ENCODE measurements at regions of chr2 and their contacts with region 1.

Region 1: DNA sequence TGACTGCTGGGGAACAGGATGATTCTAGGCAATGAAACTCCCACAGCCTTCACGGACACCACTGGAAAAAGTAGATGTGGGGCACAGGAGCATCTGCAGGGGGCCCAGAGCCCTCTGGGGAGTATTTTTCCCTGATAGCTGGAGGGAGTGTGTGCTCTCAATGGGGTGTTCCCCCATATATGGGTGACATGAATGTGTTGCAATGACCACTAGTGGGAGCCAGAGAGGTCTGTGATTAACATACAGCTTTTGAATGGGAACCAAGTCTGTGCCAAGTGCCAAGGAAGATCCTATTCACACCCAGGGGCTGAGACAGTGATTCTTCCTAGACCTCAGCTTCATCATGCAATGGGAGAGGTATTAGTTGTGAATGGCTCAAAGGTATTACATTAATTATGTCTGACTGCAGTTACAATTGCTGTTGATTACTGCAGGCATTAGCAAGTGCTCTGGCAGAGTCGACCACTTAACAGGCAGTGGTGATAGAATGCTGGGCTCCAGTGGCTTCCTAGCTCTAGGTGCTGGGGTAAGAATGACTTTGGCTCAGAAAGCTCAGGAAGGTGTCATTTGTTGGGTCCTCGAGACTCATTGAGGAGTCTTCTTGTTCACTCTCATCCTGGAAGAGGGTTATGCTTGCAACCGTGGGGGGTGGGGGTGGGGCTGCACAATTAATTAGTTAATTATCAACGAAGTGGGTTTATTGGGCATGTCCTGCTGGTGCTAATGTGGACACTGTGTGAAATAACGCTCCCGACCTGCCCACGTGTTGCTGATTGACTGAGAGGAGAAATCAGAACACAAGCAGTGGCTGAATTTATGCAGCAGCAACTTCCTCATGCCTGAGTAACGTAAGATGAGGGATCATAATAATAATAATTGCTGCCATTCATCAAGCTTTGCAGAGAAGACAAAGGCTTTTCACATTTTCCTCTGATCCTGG is 194.1 kb downstream of the CLIP4 start:
- DNase-seq: no peak
- ATAC-seq: peak; percentile 34
- H3K4me3 Mint-ChIP-seq: no peak overlapping the region
- H3K27ac Mint-ChIP-seq: no peak overlapping the region
- H3K4me1 Mint-ChIP-seq: peaks cover 2% of the 10 kb centered on the region
- H3K27me3 Mint-ChIP-seq: peaks cover 5% of the 10 kb centered on the region
- CTCF ChIP-seq: peak; percentile 73

Region 2: GRCh38 chr2:28958689-28959088 is 350.7 kb before region 1 on chr2:
- CTCF ChIA-PET with region 1: no interaction called
- POLR2A ChIA-PET with region 1: no interaction called
- intact Hi-C with region 1: loop called (anchors 10 kb)
- DNase-seq: no peak
- ATAC-seq: peak; percentile 52
- H3K4me3 Mint-ChIP-seq: no peak overlapping the region
- H3K27ac Mint-ChIP-seq: no peak overlapping the region
- H3K4me1 Mint-ChIP-seq: no peaks in the 10 kb centered on the region
- H3K27me3 Mint-ChIP-seq: peaks cover 5% of the 10 kb centered on the region
- CTCF ChIP-seq: no peak

Region 3: GRCh38 chr2:29290293-29291047 is 18.9 kb before region 1 on chr2:
- CTCF ChIA-PET with region 1: no interaction called
- POLR2A ChIA-PET with region 1: no interaction called
- intact Hi-C with region 1: no loop called
- DNase-seq: no peak
- ATAC-seq: no peak
- H3K4me3 Mint-ChIP-seq: no peak overlapping the region
- H3K27ac Mint-ChIP-seq: no peak overlapping the region
- H3K4me1 Mint-ChIP-seq: no peaks in the 10 kb centered on the region
- H3K27me3 Mint-ChIP-seq: peaks cover 20% of the 10 kb centered on the region
- CTCF ChIP-seq: no peak

Region 4: GRCh38 chr2:29469516-29469915 is 160.2 kb after region 1 on chr2:
- CTCF ChIA-PET with region 1: no interaction called
- POLR2A ChIA-PET with region 1: no interaction called
- intact Hi-C with region 1: no loop called
- DNase-seq: no peak
- ATAC-seq: no peak
- H3K4me3 Mint-ChIP-seq: no peak overlapping the region
- H3K27ac Mint-ChIP-seq: no peak overlapping the region
- H3K4me1 Mint-ChIP-seq: no peaks in the 10 kb centered on the region
- H3K27me3 Mint-ChIP-seq: peaks cover 3% of the 10 kb centered on the region
- CTCF ChIP-seq: no peak

Region 5: GRCh38 chr2:29841386-29842004 is 532.1 kb after region 1 on chr2:
- CTCF ChIA-PET with region 1: interaction called, 3 read pairs
- POLR2A ChIA-PET with region 1: no interaction called
- intact Hi-C with region 1: loop called (anchors 2 kb)
- DNase-seq: no peak
- ATAC-seq: no peak
- H3K4me3 Mint-ChIP-seq: no peak overlapping the region
- H3K27ac Mint-ChIP-seq: no peak overlapping the region
- H3K4me1 Mint-ChIP-seq: peaks cover 1% of the 10 kb centered on the region
- H3K27me3 Mint-ChIP-seq: peaks cover 9% of the 10 kb centered on the region
- CTCF ChIP-seq: no peak